ENCODE measurements at regions of chr20 and their contacts with region 1.

Region 1: DNA sequence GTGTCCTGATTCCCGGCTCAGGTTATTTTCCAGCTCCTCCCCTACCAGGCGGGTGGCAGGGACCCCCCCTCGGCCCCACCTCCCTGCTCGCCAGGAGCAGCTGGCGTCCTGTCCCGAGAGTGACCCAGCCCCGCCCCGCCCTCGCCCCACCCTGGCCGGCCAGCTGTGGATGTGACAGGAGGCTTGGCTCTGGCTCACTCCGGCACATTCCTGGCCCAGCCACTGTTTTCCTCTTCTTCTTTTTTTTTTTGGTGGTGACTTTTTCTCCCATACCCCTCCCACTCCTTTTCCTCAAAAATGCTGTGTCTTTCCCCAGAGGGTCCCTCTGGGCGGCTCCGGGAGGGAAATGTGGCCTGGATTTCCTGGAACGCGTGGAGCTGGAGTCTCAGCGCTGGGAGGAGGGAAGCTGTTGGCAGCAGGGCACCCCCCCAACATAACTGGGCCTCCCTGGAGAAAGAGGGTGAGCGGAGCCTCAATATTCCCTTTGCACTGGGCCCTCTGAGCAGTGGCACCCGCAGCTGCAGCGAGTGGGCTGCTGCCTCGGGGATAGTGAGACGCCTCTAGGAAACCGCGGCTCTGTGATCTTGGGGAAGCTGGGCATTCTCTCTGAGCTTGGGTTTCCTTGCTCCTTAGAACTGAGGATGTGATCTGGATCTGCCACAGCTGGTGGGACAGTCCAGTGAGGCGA is 28.3 kb upstream of the CSNK2A1 start:
- DNase-seq: peak; percentile 85 to 92 (median 88)
- ATAC-seq: peak; percentile 67 to 81 (median 72)
- H3K4me3 ChIP-seq: peak overlapping the region in 9 of 12 donors; percentile 8 to 39 (median 28)
- H3K27ac ChIP-seq: peak overlapping the region; percentile 51 to 94 (median 82)
- H3K4me1 ChIP-seq: peaks cover 4 to 84% (median 65%) of the 10 kb centered on the region in 12 donors
- H3K27me3 ChIP-seq: peaks cover 0 to 7% (median 0%) of the 10 kb centered on the region in 9 donors
- CTCF ChIP-seq: no peak
- POLR2A ChIP-seq: no peak

Region 2: DNA sequence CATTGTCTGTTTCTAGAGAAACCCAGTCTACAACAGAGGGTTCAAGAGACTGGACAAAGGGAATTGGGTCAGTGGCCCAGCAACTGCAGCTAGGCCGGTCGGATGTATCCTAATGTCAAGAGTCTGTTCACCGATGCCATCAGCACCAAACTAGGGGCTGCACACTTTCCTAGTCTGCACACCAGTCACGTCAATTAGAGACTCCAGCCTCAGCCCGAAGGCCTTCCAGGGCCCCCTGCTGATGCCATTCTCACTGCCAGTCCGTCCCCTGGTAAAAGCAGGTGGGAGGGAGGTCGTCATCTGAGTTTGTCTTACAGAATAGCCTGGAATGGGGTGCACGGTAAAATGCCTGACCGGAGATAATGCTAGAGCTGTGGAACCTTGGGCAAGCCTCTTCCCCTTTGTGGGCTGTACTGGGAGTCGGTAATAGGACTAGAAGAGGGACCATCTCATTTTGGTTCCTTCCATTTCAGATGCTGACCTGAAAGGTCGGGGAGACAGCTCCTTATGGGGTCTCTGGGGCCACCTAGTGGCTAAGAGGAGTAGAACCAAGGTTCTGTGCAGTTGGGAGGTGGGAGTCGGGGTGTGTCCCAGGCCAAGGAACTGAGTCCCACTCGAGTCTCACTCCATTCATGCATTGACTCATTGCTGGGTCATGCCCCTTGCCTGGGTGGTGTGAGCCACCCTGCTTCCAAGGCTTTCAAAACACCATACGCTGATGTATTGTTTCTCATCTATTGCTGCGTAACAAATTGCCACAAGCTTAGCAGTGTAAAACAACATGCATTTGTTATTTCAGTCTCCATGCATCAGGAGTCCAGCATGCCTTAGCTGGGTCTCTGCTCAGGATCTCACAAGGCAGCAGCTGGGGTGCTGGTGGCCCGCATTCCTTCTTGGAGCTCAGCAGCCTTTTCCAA is 241.4 kb before region 1 on chr20:
- intact Hi-C with region 1: no loop called
- DNase-seq: peak in 4 of 5 donors; percentile 47 to 57 (median 49)
- ATAC-seq: peak; percentile 5 to 22 (median 14)
- H3K4me3 ChIP-seq: no peak overlapping the region
- H3K27ac ChIP-seq: peak overlapping the region in 2 of 12 donors; percentile 5 to 94
- H3K4me1 ChIP-seq: peaks cover 0 to 37% (median 17%) of the 10 kb centered on the region in 12 donors
- H3K27me3 ChIP-seq: peaks cover 0 to 5% (median 0%) of the 10 kb centered on the region in 9 donors
- CTCF ChIP-seq: peak; percentile 76 to 90 (median 86)
- POLR2A ChIP-seq: no peak

Region 3: GRCh38 chr20:588932-589672 is 17.2 kb after region 1 on chr20:
- intact Hi-C with region 1: loop called in 2 of 10 experiments (anchors 2 kb)
- DNase-seq: no peak
- ATAC-seq: peak in 3 of 4 donors; percentile 9 to 46 (median 38)
- H3K4me3 ChIP-seq: no peak overlapping the region
- H3K27ac ChIP-seq: peak overlapping the region in 11 of 12 donors; percentile 29 to 93 (median 63)
- H3K4me1 ChIP-seq: peaks cover 3 to 37% (median 18%) of the 10 kb centered on the region in 12 donors
- H3K27me3 ChIP-seq: no peaks in the 10 kb centered on the region
- CTCF ChIP-seq: peak in 2 of 12 donors; percentile 7 to 8
- POLR2A ChIP-seq: no peak

Region 4: GRCh38 chr20:595330-596308 is 23.7 kb after region 1 on chr20:
- intact Hi-C with region 1: loop called in 2 of 10 experiments (anchors 2 kb)
- DNase-seq: peak; percentile 84 to 90 (median 90)
- ATAC-seq: peak; percentile 58 to 91 (median 68)
- H3K4me3 ChIP-seq: peak overlapping the region in 3 of 12 donors; percentile 1 to 15 (median 6)
- H3K27ac ChIP-seq: peak overlapping the region; percentile 42 to 94 (median 81)
- H3K4me1 ChIP-seq: peaks cover 0 to 32% (median 11%) of the 10 kb centered on the region in 12 donors
- H3K27me3 ChIP-seq: no peaks in the 10 kb centered on the region
- CTCF ChIP-seq: peak in 8 of 12 donors; percentile 20 to 60 (median 30)
- POLR2A ChIP-seq: no peak

Region 5: GRCh38 chr20:602111-602970 is 30.4 kb after region 1 on chr20:
- intact Hi-C with region 1: loop called in 6 of 10 experiments (anchors 1 to 5 kb)
- DNase-seq: peak; percentile 82 to 89 (median 84)
- ATAC-seq: peak; percentile 73 to 87 (median 81)
- H3K4me3 ChIP-seq: no peak overlapping the region
- H3K27ac ChIP-seq: peak overlapping the region; percentile 75 to 93 (median 84)
- H3K4me1 ChIP-seq: peaks cover 9 to 81% (median 58%) of the 10 kb centered on the region in 12 donors
- H3K27me3 ChIP-seq: no peaks in the 10 kb centered on the region
- CTCF ChIP-seq: peak in 2 of 12 donors; percentile 6 to 22
- POLR2A ChIP-seq: peak in 1 of 2 donors; percentile 16